ENCODE measurements at regions of chr10 and their contacts with region 1.

Region 1: DNA sequence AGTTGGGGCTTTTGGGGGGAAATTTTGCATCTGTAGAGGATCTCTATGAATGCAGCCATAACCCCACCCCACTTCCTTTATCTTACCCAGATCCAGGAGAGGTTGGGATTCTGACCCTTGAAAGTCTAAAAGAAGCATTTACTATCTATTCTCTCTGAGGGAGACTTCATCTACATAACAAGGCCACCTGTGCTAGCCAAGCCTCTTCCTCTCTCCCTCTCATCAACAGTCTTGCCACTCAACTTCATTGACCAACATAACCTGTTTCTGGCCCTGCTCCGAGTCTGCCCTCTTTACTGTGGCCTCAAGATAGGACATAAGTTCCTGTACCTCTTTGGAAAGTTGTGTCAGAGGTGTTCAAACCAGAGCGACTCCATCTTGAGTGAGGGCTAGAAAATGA is 19.4 kb downstream of the TUBAL3 start:
- DNase-seq: no peak
- H3K4me3 Mint-ChIP-seq: no peak overlapping the region
- H3K27ac Mint-ChIP-seq: no peak overlapping the region
- H3K4me1 Mint-ChIP-seq: no peaks in the 10 kb centered on the region
- H3K27me3 Mint-ChIP-seq: peaks cover 3% of the 10 kb centered on the region

Region 2: GRCh38 chr10:4813023-4813422 is 572.2 kb before region 1 on chr10:
- intact Hi-C with region 1: loop called (anchors 10 kb)
- DNase-seq: no peak
- H3K4me3 Mint-ChIP-seq: no peak overlapping the region
- H3K27ac Mint-ChIP-seq: no peak overlapping the region
- H3K4me1 Mint-ChIP-seq: no peaks in the 10 kb centered on the region
- H3K27me3 Mint-ChIP-seq: peaks cover 3% of the 10 kb centered on the region

Region 3: DNA sequence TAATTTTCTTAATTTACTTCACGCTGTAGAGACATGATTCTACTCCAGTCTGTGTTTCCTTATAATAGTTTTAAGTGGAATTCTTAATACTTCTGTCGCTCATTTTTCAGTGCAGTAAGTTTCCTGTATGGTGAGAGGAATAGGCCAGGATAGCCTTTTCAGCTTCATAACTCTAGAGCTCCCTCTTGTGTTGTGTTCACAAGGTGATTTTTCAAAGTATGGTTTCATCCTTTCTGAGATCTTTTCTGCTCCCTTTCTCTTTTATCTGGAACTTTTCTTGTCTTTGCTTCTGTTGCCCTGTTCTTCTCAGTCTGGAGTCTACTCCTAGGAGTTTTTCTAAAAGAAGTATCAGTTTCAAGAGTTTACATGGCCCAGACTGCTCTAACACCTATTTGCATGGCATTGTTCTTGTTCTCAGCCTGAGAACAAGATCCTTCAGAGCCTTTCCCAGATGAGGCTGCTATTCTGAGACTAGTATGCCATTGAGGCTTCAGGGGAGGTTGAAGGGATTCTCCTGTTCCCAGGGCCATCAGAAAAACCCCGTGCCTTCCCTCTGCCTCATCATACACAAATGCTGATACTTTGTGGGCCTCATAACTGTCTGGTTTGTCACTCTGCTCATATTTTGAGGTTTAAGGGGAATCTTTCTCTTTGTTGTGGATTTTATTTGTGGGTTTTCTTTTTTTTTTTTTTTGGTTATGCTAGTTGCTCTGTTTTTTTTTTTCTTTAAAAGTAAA is 49.0 kb after region 1 on chr10:
- intact Hi-C with region 1: loop called (anchors 1 kb)
- DNase-seq: no peak
- H3K4me3 Mint-ChIP-seq: no peak overlapping the region
- H3K27ac Mint-ChIP-seq: no peak overlapping the region
- H3K4me1 Mint-ChIP-seq: peaks cover 18% of the 10 kb centered on the region
- H3K27me3 Mint-ChIP-seq: no peaks in the 10 kb centered on the region